Naive thymus-derived CD4-positive, alpha-beta T cell (primary cell): ENCODE measurements at regions of chr12 and their contacts with region 1.

Region 1: DNA sequence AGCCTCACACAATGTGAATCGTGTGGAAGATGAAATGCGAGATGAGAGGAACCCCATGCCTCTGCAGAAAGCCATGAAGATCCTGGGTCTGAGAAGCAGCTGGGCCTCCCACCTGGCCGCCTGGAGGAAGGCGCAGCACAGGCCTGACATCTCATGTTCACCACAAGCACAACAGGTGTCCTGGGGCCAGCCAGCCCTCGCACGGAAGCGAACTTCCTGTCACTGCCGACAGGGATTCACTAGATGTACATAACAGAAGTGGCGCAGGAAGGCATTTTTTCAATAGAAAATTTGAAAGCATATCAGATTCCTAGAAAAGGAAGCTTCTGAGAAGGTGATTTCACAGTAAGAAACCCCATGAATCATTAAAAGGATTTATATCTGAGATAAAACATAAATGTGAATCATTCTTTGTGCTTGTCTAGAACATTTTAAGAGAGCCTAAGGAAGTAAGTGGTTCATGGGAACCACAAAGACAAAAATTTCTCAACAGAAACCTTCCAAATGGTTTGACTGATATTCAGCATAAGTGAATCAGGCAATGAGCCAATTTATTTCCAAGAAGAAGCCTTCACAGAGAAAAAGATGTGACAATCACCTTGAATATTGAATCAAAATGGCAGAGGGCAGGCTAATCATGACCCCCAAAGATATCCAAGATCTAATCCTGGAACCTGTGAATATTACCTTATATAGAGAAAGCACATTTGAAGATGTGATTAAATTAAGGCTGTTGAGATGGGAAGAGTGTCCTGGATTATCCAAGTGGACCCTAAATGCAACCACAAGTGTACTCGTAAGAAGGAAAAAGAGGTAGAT is 311.9 kb downstream of the DUSP6 start:
- DNase-seq: peak; percentile 13 to 76 (median 43)
- ATAC-seq: peak; percentile 93
- H3K4me3 ChIP-seq: no peak overlapping the region
- H3K4me3 Mint-ChIP-seq: peak overlapping the region; percentile 29 to 77 (median 54)
- H3K27ac ChIP-seq: no peak overlapping the region
- H3K27ac Mint-ChIP-seq: peak overlapping the region; percentile 1 to 88 (median 68)
- H3K4me1 ChIP-seq: peaks cover 7 to 12% of the 10 kb centered on the region in 2 donors
- H3K4me1 Mint-ChIP-seq: peaks cover 21 to 60% (median 31%) of the 10 kb centered on the region in 7 donors
- H3K27me3 ChIP-seq: no peaks in the 10 kb centered on the region
- H3K27me3 Mint-ChIP-seq: no peaks in the 10 kb centered on the region

Region 2: GRCh38 chr12:89117448-89118034 is 77.2 kb after region 1 on chr12:
- CTCF ChIA-PET with region 1: no interaction called
- POLR2A ChIA-PET with region 1: no interaction called
- intact Hi-C with region 1: no loop called
- DNase-seq: no peak
- ATAC-seq: no peak
- H3K4me3 ChIP-seq: no peak overlapping the region
- H3K4me3 Mint-ChIP-seq: no peak overlapping the region
- H3K27ac ChIP-seq: no peak overlapping the region
- H3K27ac Mint-ChIP-seq: no peak overlapping the region
- H3K4me1 ChIP-seq: no peaks in the 10 kb centered on the region
- H3K4me1 Mint-ChIP-seq: peaks cover 0 to 7% (median 0%) of the 10 kb centered on the region in 7 donors
- H3K27me3 ChIP-seq: no peaks in the 10 kb centered on the region
- H3K27me3 Mint-ChIP-seq: peaks cover 0 to 8% (median 2%) of the 10 kb centered on the region in 5 donors

Region 3: DNA sequence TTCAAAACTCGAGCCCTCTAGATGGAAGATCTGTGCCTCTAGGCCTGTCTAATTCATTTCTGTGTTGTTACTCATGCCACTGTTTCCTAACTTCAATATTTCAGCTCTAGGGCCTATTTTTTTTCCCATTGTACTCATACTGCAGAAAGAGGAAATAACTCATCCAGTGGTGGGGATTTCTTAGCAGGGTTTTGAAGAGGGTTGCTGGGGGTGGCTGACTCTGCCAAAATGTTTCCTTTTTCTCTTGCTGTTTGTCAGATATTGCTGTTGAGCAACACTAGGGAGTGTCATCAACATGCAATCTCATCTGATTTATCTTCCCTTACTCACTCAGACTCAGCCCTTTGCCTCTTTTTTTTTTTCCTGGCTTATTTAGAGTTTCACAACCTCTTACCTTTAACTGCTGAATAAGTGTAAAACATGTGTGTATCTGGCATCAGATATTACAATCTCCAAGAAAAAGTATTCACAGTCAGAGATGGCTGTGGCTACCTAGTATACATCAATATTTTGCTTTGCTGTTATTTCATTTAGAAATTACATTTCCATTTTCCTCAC is 122.4 kb after region 1 on chr12:
- CTCF ChIA-PET with region 1: no interaction called
- POLR2A ChIA-PET with region 1: no interaction called
- intact Hi-C with region 1: loop called in 1 of 2 experiments (anchors 1 kb)
- DNase-seq: peak in 1 of 9 donors; percentile 54
- ATAC-seq: peak; percentile 77
- H3K4me3 ChIP-seq: no peak overlapping the region
- H3K4me3 Mint-ChIP-seq: no peak overlapping the region
- H3K27ac ChIP-seq: no peak overlapping the region
- H3K27ac Mint-ChIP-seq: no peak overlapping the region
- H3K4me1 ChIP-seq: peaks cover 0 to 9% of the 10 kb centered on the region in 2 donors
- H3K4me1 Mint-ChIP-seq: peaks cover 10 to 31% (median 20%) of the 10 kb centered on the region in 7 donors
- H3K27me3 ChIP-seq: no peaks in the 10 kb centered on the region
- H3K27me3 Mint-ChIP-seq: no peaks in the 10 kb centered on the region

Region 4: DNA sequence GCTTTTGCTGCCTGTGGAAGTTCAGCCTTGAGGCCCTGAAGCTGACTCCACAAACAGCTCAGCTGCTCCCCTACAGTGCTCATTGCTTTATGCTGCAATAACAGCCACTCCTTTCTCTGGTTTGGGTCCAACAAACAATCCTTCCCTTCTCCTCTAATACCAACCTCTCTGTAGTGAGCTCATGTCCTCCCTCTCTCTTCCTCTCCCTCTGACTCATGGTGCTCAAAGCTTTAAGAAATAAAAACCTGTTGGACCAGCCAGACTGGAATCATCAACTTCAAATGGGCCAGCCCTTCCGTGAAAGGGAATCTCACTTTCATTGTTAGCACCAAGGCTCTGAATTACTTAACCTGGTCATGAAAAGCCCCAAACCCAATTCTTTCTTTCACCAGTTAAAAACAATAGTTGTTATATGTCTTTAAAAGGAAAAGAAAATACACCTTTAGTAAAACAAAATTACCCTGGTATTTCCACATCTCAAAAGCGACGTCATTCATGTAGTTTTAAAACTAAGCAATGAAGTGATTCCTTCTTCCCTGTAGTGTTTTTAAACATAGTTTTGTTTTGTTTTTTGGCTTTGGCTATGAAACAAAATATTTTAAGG is 185.6 kb after region 1 on chr12:
- CTCF ChIA-PET with region 1: no interaction called
- POLR2A ChIA-PET with region 1: no interaction called
- intact Hi-C with region 1: loop called in 1 of 2 experiments (anchors 5 kb)
- DNase-seq: peak in 1 of 9 donors; percentile 47
- ATAC-seq: peak; percentile 26
- H3K4me3 ChIP-seq: no peak overlapping the region
- H3K4me3 Mint-ChIP-seq: peak overlapping the region in 8 of 10 donors; percentile 26 to 74 (median 54)
- H3K27ac ChIP-seq: no peak overlapping the region
- H3K27ac Mint-ChIP-seq: peak overlapping the region; percentile 38 to 94 (median 63)
- H3K4me1 ChIP-seq: peaks cover 16 to 17% of the 10 kb centered on the region in 2 donors
- H3K4me1 Mint-ChIP-seq: peaks cover 18 to 76% (median 48%) of the 10 kb centered on the region in 7 donors
- H3K27me3 ChIP-seq: no peaks in the 10 kb centered on the region
- H3K27me3 Mint-ChIP-seq: no peaks in the 10 kb centered on the region

Region 5: GRCh38 chr12:89470741-89471509 is 430.6 kb after region 1 on chr12:
- CTCF ChIA-PET with region 1: interaction called, 3 read pairs
- POLR2A ChIA-PET with region 1: no interaction called
- intact Hi-C with region 1: loop called in 1 of 2 experiments (anchors 2 kb)
- DNase-seq: peak in 6 of 9 donors; percentile 28 to 56 (median 46)
- ATAC-seq: peak; percentile 86
- H3K4me3 ChIP-seq: no peak overlapping the region
- H3K4me3 Mint-ChIP-seq: peak overlapping the region in 1 of 10 donors; percentile 35
- H3K27ac ChIP-seq: no peak overlapping the region
- H3K27ac Mint-ChIP-seq: peak overlapping the region in 5 of 9 donors; percentile 12 to 85 (median 48)
- H3K4me1 ChIP-seq: peaks cover 23 to 31% of the 10 kb centered on the region in 2 donors
- H3K4me1 Mint-ChIP-seq: peaks cover 26 to 63% (median 44%) of the 10 kb centered on the region in 7 donors
- H3K27me3 ChIP-seq: no peaks in the 10 kb centered on the region
- H3K27me3 Mint-ChIP-seq: no peaks in the 10 kb centered on the region

Region 6: DNA sequence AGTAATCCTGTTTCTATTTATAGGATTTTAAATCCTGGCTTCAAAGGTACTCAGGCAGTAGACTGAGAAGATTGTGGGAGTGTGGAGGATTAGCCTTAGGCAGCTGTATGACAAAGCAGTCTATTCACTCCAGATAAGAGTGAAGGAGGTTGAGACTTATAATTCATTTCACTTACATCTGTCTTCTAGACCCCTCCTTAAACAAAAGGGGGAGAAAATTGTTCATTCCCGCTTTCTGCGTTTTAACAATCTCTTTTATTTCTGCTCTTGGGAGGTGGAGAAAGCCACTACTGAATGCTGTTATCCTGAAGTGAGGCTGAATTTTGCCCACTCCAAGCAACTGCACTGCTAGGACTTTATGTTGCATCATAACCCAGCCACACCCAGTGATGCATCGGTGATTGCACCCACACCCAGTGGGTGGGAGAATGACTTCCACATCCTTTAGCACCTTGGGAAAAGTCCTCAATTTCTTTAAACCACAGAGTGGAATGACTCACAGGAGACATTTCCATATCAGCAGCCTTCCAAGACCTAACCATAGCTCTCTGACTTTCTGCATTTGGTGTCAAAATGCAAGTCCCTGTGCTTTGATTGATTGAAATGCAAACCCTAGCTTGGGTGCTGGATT is 1050.8 kb after region 1 on chr12:
- CTCF ChIA-PET with region 1: no interaction called
- POLR2A ChIA-PET with region 1: no interaction called
- intact Hi-C with region 1: loop called in 1 of 2 experiments (anchors 5 kb)
- DNase-seq: peak in 1 of 9 donors; percentile 36
- ATAC-seq: peak; percentile 76
- H3K4me3 ChIP-seq: no peak overlapping the region
- H3K4me3 Mint-ChIP-seq: no peak overlapping the region
- H3K27ac ChIP-seq: no peak overlapping the region
- H3K27ac Mint-ChIP-seq: no peak overlapping the region
- H3K4me1 ChIP-seq: no peaks in the 10 kb centered on the region
- H3K4me1 Mint-ChIP-seq: peaks cover 0 to 16% (median 5%) of the 10 kb centered on the region in 7 donors
- H3K27me3 ChIP-seq: no peaks in the 10 kb centered on the region
- H3K27me3 Mint-ChIP-seq: no peaks in the 10 kb centered on the region

Region 7: DNA sequence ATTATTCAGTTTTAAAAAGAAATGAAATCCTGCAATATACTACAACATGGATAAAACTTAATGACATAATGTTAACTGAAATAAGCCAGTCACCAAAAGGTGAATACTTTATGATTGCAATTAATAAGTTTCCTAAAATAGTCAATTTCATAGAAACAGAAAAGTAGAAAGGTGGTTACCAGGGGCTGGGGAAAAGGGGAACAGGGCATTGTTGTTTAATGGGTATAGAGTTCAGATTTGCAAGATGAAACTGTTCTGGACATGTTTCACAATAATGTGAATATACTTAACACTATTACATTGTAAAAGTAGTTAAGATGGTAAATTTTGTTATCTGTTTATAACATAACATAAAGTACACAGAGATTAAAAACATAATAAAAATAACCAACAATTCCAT is 1363.7 kb after region 1 on chr12:
- CTCF ChIA-PET with region 1: no interaction called
- POLR2A ChIA-PET with region 1: no interaction called
- intact Hi-C with region 1: no loop called
- DNase-seq: no peak
- ATAC-seq: no peak
- H3K4me3 ChIP-seq: no peak overlapping the region
- H3K4me3 Mint-ChIP-seq: no peak overlapping the region
- H3K27ac ChIP-seq: no peak overlapping the region
- H3K27ac Mint-ChIP-seq: no peak overlapping the region
- H3K4me1 ChIP-seq: no peaks in the 10 kb centered on the region
- H3K4me1 Mint-ChIP-seq: peaks cover 0 to 2% (median 0%) of the 10 kb centered on the region in 7 donors
- H3K27me3 ChIP-seq: no peaks in the 10 kb centered on the region
- H3K27me3 Mint-ChIP-seq: peaks cover 0 to 5% (median 0%) of the 10 kb centered on the region in 5 donors